Left cardiac atrium (tissue), 4 donors: ENCODE measurements at regions of chr20 and their contacts with region 1.

Region 1: GRCh38 chr20:59495894-59496510 is 108.3 kb upstream of the PHACTR3 start:
- DNase-seq: peak; percentile 68
- ATAC-seq: peak; percentile 57 to 72

Region 2: DNA sequence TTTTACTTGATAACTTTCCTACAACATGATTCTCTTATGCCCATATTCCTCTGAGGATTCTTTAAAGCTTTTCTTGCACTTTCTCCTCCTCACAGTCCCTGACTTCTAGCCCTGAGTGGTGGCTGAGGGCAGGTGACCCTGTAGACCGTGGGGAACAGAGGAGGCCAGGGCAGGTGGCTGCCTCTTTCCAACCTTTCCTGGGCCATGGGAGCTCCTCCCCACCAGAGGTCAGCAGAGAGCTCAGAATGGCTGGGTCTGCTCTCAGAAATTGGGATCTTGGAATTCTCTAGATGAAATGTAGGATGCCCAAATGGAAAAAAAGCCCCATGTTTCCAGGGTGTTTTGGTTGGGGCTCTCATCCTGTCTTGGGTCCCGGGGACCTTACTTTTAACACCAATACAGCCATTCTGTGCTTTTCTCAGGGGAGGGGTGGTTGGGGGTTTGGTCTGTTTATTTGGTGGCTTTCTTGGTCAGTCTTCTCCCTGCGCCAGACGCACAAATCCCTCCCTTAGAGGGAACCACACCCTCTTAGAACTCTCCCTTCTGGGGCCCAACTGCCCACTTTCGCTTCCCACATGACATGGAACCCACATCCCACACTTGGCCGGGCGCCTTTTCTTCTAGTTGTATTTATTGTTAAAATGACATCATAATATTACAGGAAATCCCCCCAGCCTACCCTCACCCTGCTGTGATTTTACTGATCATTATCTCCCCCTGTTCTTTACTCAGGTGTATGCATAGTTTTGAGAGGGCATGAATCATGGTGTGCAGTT is 625.6 kb before region 1 on chr20:
- intact Hi-C with region 1: loop called in 1 of 2 experiments (anchors 5 kb)
- DNase-seq: peak; percentile 76
- ATAC-seq: peak; percentile 85